ENCODE measurements at regions of chr17 and their contacts with region 1.

Region 1: GRCh38 chr17:27353461-27354050 is 59.6 kb downstream of the WSB1 start:
- DNase-seq: peak; percentile 95
- H3K4me3 Mint-ChIP-seq: peak overlapping the region; percentile 84
- H3K27ac Mint-ChIP-seq: peak overlapping the region; percentile 99
- H3K4me1 Mint-ChIP-seq: peaks cover 16% of the 10 kb centered on the region
- H3K27me3 Mint-ChIP-seq: no peaks in the 10 kb centered on the region
- CTCF ChIP-seq: peak; percentile 92

Region 2: DNA sequence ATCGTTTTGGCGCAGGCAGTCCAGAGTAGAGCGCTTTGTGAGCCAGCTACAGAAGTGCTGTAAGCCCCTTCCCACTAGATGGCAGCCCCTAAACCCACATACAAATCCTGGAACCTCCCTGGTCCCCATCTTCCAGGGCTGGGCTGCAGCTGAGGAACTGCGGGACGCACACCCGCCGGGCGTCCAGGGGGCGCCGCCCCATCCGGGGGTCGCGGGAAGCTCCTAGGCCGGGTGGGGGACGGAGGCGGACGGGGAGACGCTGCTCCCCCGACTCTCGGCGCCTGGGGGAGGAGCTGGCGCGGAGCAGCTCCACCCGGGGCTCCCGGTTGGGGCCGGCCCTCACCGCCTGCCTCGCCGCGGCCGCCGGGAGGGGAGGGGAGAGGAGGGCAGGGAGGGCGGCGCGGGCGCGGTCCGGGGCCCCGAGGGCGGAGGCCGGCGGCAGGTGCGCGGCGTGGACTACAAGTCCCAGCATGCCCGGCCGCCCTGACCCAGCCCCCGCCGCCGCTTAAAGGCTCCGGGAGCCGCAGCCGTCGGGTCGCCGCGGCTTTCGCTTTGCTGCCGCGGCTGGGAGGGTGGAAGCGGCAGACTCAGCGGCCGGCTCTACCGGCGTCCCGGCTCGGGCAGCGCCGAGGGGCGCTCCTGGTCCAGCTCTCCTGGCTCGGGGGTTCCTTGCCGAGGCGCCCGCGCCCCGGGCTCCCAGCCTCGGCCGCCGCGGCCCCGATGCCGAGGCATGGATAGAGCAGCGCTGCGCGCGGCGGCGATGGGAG is 102.5 kb after region 1 on chr17 and contains the start of gene KSR1:
- CTCF ChIA-PET with region 1: interaction called, 3 read pairs
- intact Hi-C with region 1: loop called (anchors 10 kb)
- DNase-seq: peak; percentile 82
- H3K4me3 Mint-ChIP-seq: peak within 1 kb of the TSS; percentile 72
- H3K27ac Mint-ChIP-seq: no peak within 1 kb of the TSS
- H3K4me1 Mint-ChIP-seq: peaks cover 18% of the 10 kb centered on the region
- H3K27me3 Mint-ChIP-seq: peaks cover 64% of the 10 kb centered on the region
- CTCF ChIP-seq: no peak
- total RNA-seq, gene KSR1: 3.6 and 4.5 TPM in 2 replicates